Transverse colon (tissue), 4 donors: ENCODE measurements at regions of chr9 and their contacts with region 1.

Region 1: DNA sequence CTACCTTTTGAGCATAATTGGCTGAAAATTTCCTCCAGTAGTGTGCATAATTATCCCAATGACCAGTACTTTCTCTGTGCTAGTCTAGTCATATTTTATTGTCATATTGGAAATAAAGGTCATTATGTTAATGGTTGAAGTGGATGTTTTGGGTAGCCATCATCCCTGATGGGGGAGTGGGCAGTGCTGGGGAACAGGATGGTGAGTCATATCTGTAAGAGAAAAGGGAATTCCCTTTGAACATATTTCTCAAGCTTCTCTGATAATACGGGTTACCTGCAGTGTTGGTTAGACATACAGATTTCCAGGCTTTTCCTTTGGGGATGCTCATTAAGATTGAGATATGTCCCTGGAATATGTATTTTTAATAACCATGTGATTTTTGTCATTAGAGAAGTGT is 33.3 kb upstream of the SPATA31D4 start:
- DNase-seq: no peak
- H3K4me3 ChIP-seq: no peak overlapping the region
- H3K27ac ChIP-seq: no peak overlapping the region
- H3K4me1 ChIP-seq: peaks cover 0 to 20% (median 6%) of the 10 kb centered on the region in 4 donors
- H3K27me3 ChIP-seq: no peaks in the 10 kb centered on the region
- CTCF ChIP-seq: no peak
- EP300 ChIP-seq: no peak
- POLR2A ChIP-seq: no peak

Region 2: GRCh38 chr9:81318549-81318948 is 576.3 kb before region 1 on chr9:
- in situ Hi-C with region 1: no loop called
- intact Hi-C with region 1: no loop called
- DNase-seq: no peak
- H3K4me3 ChIP-seq: no peak overlapping the region
- H3K27ac ChIP-seq: no peak overlapping the region
- H3K4me1 ChIP-seq: no peaks in the 10 kb centered on the region
- H3K27me3 ChIP-seq: no peaks in the 10 kb centered on the region
- CTCF ChIP-seq: no peak
- EP300 ChIP-seq: no peak
- POLR2A ChIP-seq: no peak

Region 3: GRCh38 chr9:82968816-82969215 is 1073.9 kb after region 1 on chr9:
- in situ Hi-C with region 1: no loop called
- intact Hi-C with region 1: loop called (anchors 5 kb)
- DNase-seq: no peak
- H3K4me3 ChIP-seq: no peak overlapping the region
- H3K27ac ChIP-seq: no peak overlapping the region
- H3K4me1 ChIP-seq: no peaks in the 10 kb centered on the region
- H3K27me3 ChIP-seq: no peaks in the 10 kb centered on the region
- CTCF ChIP-seq: no peak
- EP300 ChIP-seq: no peak
- POLR2A ChIP-seq: no peak